Activated T-helper 2 cell treated with anti-CD3 and anti-CD28 coated beads, Interferon-gamma antibody, Interleukin-2, Interleukin-4, amounts not matched to agents 10 μg/mL and 5 μg/mL and 100 μg/mL, durations not matched to agents 14 hours and 24 hours and 36 hours (primary cell): ENCODE measurements at regions of chr15 and their contacts with region 1.

Region 1: DNA sequence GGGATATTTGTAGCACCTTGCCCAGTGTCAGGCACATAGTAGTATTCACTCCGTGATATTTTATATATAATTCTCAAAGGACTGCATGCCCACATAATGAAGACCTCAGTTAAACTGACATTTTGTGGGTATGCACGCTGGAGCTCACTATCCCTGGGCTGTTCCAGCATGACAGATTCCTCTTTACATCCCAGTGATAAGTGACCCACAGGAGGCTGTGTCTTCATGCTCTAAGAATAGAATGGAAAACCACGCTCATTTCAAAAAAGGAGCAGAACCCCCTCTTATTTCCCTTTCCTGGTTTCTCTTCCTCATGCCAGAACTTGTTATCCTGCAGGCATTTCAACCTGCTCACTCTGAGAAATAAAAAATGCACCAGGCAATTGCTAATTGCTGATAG is 717.5 kb downstream of the AGBL1 start:
- DNase-seq: no peak
- H3K4me3 Mint-ChIP-seq: no peak overlapping the region
- H3K27ac Mint-ChIP-seq: no peak overlapping the region
- H3K4me1 Mint-ChIP-seq: no peaks in the 10 kb centered on the region
- H3K27me3 Mint-ChIP-seq: no peaks in the 10 kb centered on the region

Region 2: DNA sequence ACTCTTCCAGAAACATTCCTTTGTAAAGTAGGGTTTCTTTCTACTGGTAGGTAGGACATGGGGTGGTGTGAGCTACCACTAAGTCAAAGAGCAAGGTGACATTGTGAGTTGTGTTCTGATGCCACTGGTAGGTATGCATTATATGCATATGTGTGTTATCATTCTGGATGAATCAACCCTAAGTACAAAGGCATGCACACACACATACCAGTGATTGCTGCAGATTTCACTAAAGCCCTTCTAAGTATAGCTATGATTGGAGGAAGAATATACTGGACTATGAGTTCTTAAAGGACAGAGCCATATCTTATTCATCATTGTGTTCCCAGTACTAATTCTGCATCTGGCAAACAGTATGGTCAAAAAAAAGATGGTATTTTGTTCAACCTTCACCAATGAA is 71.5 kb before region 1 on chr15:
- intact Hi-C with region 1: no loop called
- DNase-seq: no peak
- H3K4me3 Mint-ChIP-seq: no peak overlapping the region
- H3K27ac Mint-ChIP-seq: no peak overlapping the region
- H3K4me1 Mint-ChIP-seq: peaks cover 4% of the 10 kb centered on the region
- H3K27me3 Mint-ChIP-seq: no peaks in the 10 kb centered on the region

Region 3: DNA sequence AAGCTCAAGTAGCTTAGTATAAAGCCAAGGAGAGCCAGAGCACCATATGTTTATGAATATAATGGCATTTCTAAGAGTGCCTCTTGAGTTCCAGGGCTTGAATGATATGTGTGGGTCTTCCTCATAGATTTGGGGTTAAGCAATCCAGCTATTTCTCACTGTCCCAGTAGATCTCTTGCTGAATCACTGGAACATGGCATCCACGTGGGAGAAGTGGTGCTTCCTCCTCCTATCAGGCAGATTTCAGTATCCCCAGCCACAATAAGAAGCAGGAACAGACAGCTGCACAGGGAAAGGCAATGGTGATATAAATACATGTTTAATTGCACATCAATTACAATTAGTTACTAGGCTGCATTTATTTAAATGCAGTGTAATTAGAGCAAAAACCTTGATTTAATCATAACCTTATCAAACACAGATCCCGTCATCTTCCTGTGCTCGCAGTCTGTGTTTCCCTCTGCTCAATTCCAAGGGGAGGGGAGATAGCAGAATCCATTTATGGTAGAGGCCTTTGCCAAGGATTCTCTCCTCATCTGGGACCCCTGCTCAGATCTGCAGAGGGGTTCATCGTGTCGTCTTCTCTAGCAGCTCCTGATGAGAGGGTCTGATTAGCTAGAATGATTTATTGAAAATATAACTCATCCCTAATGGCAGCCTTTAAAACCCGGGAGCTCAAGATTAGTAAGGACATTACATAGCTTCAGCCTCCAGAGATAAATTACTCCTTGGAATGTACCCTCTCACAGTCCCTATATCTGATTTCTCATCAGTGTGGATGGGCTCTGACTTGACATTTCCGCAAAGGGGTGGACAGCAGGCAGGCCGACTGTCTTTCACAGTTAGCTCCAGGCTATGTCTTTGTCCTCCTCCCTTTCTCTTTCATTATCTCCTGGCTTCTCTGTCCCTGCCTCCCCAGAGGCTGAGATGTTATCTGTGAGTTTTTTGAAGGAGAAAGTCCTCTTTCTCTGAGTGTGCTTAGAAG is 58.5 kb after region 1 on chr15:
- intact Hi-C with region 1: loop called (anchors 10 kb)
- DNase-seq: no peak
- H3K4me3 Mint-ChIP-seq: no peak overlapping the region
- H3K27ac Mint-ChIP-seq: no peak overlapping the region
- H3K4me1 Mint-ChIP-seq: no peaks in the 10 kb centered on the region
- H3K27me3 Mint-ChIP-seq: no peaks in the 10 kb centered on the region